Right lobe of liver (tissue), 6 donors: ENCODE measurements at regions of chr19 and their contacts with region 1.

Region 1: DNA sequence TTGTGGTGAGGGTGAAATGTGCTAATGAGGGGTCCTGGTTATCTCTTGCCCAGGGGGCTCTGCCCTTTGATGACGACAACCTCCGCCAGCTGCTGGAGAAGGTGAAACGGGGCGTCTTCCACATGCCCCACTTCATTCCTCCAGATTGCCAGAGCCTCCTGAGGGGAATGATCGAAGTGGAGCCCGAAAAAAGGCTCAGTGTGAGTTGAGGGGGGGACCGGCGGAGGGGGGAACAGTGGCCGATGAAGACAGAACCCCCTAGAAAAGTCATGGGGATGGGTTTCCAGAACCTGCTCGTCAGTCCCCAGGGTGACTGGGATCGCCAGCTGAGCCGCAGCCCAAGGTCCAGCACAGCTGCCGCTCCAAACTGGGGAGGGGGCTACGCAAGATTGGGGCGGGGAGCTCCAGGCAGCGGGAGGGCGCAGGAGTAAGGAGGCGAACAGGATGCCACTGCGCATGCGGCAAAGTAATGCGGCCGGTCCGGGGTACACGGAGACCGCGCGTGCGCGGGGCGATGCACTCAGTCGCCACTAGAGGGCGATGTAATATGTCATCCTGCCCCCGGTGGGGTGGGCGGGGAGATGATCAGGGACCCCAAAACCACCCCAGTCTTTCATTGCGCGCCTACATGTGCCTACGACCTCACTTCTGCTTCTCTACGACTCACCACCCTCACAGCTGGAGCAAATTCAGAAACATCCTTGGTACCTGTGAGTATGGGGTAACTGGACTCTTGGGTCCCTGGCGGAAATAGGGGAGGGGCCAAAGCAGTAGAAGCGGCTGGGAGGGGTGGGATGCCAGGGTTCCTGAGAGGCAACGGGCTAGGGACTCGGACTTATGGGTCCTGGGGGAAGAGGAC is 17.9 kb downstream of the BRSK1 start:
- DNase-seq: peak; percentile 89 to 91 (median 91)
- ATAC-seq: peak; percentile 86 to 97 (median 95)
- H3K4me3 ChIP-seq: peak overlapping the region in 2 of 3 donors; percentile 17 to 42
- H3K27ac ChIP-seq: no peak overlapping the region
- H3K4me1 ChIP-seq: no peaks in the 10 kb centered on the region
- H3K27me3 ChIP-seq: no peaks in the 10 kb centered on the region
- CTCF ChIP-seq: peak; percentile 95 to 97 (median 96)
- POLR2A ChIP-seq: no peak

Region 2: DNA sequence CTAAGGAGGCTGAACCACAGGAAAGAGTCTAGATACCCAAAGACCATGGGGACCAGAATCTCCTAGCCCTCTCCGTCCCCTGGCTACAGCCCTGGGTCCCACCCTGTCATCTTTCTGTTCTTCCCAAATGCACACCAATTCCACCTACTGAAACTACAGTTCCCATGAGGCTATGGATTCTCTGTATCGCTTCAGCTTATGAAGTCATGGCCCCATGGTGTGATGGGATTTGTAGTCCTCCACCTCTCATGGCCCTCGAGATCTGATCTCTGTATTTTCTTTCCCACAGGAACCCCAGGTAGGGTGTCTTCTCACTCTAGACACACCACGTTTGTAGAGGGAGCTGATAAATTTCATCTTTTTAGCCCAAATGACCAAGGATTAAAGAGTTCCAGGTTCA is 104.2 kb before region 1 on chr19:
- intact Hi-C with region 1: no loop called
- DNase-seq: no peak
- ATAC-seq: peak in 1 of 4 donors; percentile 14
- H3K4me3 ChIP-seq: no peak overlapping the region
- H3K27ac ChIP-seq: no peak overlapping the region
- H3K4me1 ChIP-seq: no peaks in the 10 kb centered on the region
- H3K27me3 ChIP-seq: no peaks in the 10 kb centered on the region
- CTCF ChIP-seq: no peak
- POLR2A ChIP-seq: no peak

Region 3: DNA sequence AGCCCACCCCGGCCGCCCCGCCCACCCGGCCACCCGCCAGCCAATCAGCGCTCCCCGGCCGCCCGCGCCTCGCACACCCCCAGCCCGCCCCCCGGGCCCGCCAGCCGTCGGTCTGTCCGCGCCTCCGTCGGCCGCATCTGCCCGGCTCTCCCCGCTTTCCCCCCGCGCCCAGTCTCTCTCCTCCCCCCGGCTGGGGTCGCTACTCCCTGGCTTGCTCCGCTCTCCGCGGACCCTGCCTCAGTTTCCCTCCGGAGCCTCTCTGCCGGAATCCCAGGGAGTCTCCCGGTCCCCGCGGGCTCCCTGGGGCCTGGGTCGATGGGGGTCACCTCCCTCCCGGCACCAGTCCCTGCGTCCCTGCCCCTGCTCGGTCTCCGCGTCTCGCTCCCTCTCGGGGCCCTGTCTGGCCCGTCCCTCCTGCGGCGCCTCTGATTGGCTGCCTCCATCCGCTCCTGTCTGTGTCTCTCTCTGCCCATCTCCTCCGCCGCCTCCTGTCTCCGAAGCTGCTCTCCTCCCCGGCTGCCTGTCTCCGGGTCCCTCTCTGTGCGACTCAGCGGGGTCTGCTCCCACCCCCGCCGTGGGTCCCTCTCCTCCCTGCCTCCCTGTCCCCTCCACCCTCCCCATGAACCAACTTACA is 68.1 kb after region 1 on chr19:
- intact Hi-C with region 1: loop called in 1 of 2 experiments (anchors 10 kb)
- DNase-seq: no peak
- ATAC-seq: peak in 1 of 4 donors; percentile 6
- H3K4me3 ChIP-seq: no peak overlapping the region
- H3K27ac ChIP-seq: no peak overlapping the region
- H3K4me1 ChIP-seq: no peaks in the 10 kb centered on the region
- H3K27me3 ChIP-seq: peaks cover 0 to 15% of the 10 kb centered on the region in 2 donors
- CTCF ChIP-seq: no peak
- POLR2A ChIP-seq: no peak

Region 4: DNA sequence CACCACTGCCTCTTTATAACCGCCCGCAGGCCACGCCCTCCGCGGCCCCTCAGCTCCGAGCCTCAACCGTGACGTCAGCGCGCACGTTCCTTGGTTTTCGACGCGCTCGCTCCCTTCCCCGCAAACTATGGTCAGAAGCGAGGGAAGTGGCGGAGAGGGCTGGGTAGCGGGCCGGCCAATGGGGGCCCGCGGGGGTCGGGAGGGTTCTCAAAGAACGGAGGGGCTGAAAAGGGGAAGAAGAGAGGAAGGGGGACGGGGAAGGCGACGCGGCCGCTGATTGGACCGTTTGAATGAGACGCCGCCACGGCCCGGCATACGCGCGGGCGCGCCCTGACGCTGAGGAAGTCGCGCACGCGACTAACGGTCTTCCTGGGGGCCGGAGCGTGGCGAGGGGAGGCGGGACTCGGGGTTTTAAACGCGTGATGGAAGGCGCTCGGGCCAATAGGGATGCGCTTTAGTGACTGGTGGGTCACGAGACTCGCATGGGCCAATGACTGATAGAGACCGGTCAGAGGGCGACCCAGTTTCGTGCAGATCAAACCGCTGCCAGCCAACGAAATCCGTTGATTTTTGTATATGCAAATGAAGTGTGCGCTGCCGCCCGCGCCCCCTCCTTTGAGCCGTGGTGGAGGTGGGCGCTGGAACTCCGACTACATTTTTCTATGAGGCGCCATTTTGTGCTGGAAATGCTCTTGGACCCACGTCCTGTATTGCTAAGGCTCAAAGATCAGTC is 106.3 kb after region 1 on chr19:
- intact Hi-C with region 1: loop called (anchors 10 kb)
- DNase-seq: peak; percentile 98 to 99 (median 99)
- ATAC-seq: peak; percentile 97
- H3K4me3 ChIP-seq: peak overlapping the region; percentile 71 to 88 (median 83)
- H3K27ac ChIP-seq: peak overlapping the region; percentile 90 to 95 (median 92)
- H3K4me1 ChIP-seq: peaks cover 0 to 2% (median 0%) of the 10 kb centered on the region in 4 donors
- H3K27me3 ChIP-seq: no peaks in the 10 kb centered on the region
- CTCF ChIP-seq: no peak
- POLR2A ChIP-seq: no peak

Region 5: DNA sequence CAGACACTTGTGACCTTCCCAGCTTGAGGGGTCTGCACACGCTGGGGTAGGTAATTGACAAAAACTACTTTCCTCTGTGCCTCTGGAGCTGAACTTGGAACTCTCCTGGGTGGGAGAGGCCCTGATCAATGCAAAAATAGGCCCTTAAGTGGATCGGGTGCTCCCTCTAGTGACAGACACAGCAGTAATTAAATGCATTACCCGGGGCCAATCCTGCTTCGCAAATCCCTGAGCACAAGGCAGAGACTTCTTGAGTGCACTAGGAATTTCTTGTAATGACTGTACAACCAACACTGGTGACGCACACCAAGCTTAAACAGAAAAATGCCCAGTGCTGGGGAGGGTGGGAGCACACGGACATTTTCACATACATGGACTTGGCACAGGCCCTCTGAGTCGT is 116.5 kb after region 1 on chr19:
- intact Hi-C with region 1: loop called in 1 of 2 experiments (anchors 10 kb)
- DNase-seq: peak in 2 of 3 donors; percentile 35 to 61
- ATAC-seq: peak; percentile 90 to 98 (median 92)
- H3K4me3 ChIP-seq: no peak overlapping the region
- H3K27ac ChIP-seq: no peak overlapping the region
- H3K4me1 ChIP-seq: no peaks in the 10 kb centered on the region
- H3K27me3 ChIP-seq: no peaks in the 10 kb centered on the region
- CTCF ChIP-seq: peak; percentile 68 to 81 (median 72)
- POLR2A ChIP-seq: no peak